Heart left ventricle (tissue), 16 donors: ENCODE measurements at regions of chr12 and their contacts with region 1.

Region 1: GRCh38 chr12:31612819-31613218 is 21.9 kb upstream of the DENND5B start:
- DNase-seq: no peak
- ATAC-seq: no peak
- H3K4me3 ChIP-seq: no peak overlapping the region
- H3K27ac ChIP-seq: no peak overlapping the region
- H3K4me1 ChIP-seq: no peaks in the 10 kb centered on the region
- H3K27me3 ChIP-seq: no peaks in the 10 kb centered on the region
- CTCF ChIP-seq: no peak
- POLR2A ChIP-seq: no peak

Region 2: GRCh38 chr12:31431721-31432240 is 181.0 kb before region 1 on chr12:
- intact Hi-C with region 1: no loop called
- DNase-seq: no peak
- ATAC-seq: peak in 2 of 4 donors; percentile 18 to 22
- H3K4me3 ChIP-seq: no peak overlapping the region
- H3K27ac ChIP-seq: peak overlapping the region in 4 of 12 donors; percentile 5 to 41 (median 29)
- H3K4me1 ChIP-seq: peaks cover 0 to 11% (median 1%) of the 10 kb centered on the region in 12 donors
- H3K27me3 ChIP-seq: no peaks in the 10 kb centered on the region
- CTCF ChIP-seq: no peak
- POLR2A ChIP-seq: no peak

Region 3: GRCh38 chr12:31600252-31600651 is 12.6 kb before region 1 on chr12:
- intact Hi-C with region 1: loop called in 1 of 10 experiments (anchors 1 kb)
- DNase-seq: no peak
- ATAC-seq: no peak
- H3K4me3 ChIP-seq: no peak overlapping the region
- H3K27ac ChIP-seq: no peak overlapping the region
- H3K4me1 ChIP-seq: peaks cover 0 to 3% (median 0%) of the 10 kb centered on the region in 12 donors
- H3K27me3 ChIP-seq: no peaks in the 10 kb centered on the region
- CTCF ChIP-seq: no peak
- POLR2A ChIP-seq: no peak